Posterior vena cava (tissue), 2 donors: ENCODE measurements at regions of chr14 and their contacts with region 1.

Region 1: DNA sequence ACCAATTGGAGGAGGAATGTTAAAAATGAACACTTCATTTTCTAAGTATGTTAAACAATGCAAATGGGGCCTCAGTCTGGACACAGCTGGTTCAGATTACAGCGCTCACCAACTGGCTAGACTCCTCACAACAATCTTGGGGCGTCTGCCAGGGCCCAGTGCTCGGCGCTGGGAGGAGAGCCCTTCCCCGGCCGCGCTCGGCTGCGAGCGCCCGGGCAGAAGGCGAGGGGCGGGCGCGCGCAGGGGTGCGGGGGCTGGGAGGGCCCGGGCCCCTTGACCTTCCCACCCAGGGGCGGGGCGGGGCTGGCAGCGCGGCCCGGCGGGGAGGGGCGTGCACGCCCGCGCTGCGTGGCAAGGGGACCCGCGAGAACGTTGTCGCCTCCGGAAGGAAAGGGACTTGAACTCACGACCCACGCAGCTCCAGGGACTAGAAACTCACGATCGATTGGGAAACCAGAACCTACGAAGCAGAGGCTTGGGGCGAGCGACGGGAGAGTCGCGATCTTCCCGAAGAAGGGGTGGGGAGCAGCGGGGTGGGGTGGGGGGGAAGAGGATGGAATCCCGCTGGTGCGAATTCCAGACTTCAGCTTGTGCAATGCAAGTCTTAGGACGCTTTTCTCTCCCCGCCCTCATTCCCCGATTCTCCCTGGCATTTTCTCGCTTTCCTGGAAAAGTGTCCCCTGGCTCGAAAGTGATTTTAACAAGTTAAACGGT is at the start of gene FBLN5:
- DNase-seq: peak; percentile 89
- total RNA-seq, gene FBLN5: 105 to 186 TPM

Region 2: DNA sequence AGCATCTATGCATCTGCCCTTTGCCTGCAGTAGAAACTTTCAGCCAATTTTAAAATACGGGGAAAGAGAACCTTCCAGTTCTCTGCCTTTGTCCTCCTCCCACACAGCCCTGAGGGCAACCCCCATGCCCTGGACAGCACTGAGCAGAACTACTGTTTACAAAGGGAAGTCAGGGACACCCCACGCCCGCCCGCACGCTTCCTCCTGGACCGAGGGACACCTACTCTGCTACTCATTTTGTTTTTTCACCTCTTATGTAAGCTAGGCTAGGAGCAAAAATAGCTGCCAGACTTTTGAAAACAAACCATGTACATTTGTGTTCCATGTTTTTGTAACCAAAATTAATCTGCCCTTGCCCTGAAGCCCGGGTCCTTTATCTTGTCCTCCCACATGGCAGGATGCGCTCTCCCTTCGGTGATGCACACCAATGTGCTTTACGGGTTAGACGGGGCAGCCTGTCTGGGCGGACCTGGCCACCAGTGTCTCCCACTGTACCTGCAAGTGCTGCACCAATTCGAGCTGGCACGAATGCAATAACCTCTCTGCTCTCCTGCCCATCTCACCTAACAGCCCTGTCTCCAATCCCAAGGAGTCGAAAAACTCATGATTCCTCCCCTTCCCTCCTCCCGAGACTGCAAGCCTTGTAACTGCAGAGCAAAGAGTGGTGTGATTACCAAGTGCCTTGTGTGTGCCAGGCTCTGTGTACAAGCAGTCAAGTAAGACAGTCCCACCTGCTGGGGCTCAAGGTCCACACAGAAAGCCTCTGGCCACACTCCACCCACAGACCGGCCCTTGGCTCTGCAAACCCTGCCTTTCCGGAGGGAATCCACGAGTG is 615.3 kb before region 1 on chr14:
- intact Hi-C with region 1: loop called in 1 of 2 experiments (anchors 5 kb)
- DNase-seq: no peak